Heart right ventricle (tissue), 16 donors: ENCODE measurements at regions of chr9 and their contacts with region 1.

Region 1: DNA sequence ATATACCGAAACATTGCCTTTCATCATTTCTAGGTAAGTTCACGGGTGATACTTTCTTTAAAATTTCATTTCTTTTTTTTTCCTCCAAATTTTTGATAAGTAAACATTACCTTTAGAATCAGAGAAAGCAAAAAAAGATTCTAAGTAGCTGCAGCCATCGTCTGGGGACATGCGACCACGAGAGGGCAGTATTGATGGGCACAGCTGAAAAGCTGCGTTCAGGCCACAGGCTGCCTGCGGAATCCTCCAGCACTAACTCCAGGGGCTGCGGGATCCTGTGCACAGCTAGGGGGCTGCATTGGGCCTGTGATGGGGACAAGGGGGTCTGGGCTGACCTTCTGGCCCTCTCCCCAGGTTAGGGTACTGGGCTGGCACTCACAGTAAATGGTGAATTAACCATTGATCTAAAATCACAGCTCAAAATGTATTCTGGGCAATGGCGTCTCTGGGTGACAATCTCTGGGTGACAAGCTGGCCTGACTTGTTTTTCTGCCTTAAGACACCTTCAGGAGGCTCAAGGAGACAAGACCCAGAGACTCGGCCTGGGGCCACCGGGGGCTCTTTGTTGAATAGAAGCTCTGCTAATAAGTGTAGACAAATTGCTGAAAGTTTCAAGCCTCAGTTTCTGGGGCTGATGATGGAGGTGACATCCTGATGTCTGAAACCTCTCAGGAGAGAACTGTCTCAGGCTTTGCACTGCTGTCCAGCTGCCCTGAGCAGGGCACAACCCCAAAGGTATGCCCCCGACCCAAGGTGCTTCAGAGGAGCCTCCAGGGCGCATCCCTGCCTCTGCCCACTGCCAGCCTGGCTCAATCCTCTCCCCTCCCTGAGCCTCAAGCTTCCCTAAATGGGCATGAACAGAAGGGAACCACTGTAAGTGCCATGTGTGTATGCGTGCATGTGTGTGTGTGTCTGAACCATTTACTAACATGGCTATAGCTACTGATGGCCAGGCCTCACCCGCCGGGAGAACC is 44.3 kb upstream of the SARDH start:
- DNase-seq: peak; percentile 69 to 74
- ATAC-seq: peak in 7 of 8 donors; percentile 34 to 73 (median 62)
- H3K4me3 ChIP-seq: no peak overlapping the region
- H3K27ac ChIP-seq: no peak overlapping the region
- H3K4me1 ChIP-seq: peaks cover 0 to 16% (median 0%) of the 10 kb centered on the region in 9 donors
- H3K27me3 ChIP-seq: no peaks in the 10 kb centered on the region
- CTCF ChIP-seq: peak; percentile 69 to 89 (median 81)

Region 2: DNA sequence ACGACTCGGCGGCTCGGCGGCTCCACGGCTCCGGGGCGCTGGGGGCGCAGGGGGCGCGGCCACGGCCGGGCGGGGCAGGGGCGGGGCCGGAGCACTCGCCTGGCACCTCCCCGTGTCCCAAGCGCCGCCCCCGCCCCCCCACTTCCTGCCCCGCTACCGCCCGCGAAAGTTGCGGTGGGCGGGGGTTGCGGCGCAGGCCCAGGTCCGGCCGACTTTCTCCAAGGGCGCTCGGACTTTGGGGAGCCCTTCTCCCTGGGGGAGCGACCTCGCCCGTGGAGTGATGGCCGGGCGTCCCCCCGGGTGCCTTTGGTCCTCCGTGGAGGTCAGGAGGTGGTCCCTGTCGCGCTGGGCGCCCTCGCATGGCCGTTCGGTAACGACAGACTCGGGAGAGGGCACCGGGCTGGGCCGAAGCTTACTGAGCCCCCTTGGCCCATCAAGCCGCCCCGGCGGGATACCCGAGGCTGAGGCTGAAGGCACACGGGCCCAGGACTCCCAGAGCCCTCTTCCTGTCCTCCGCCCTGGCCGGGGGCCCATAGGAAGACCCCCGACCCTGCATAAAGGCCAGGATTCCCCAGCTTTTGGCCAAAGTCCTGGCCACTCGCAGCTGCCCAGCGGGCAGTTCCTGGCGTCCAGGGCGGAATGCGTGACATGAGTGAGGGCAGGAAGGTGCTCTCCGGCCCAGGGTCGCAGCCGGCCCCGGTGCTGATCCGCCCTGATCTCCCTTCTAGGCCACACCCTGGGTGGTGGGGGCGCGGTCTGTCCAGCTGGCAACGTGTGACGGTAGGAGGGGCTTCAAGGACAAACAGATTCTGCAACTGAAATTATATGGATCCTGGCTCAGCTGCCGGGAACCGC is 210.6 kb after region 1 on chr9:
- intact Hi-C with region 1: loop called in 4 of 10 experiments (anchors 2 kb)
- DNase-seq: peak; percentile 84 to 86
- ATAC-seq: peak; percentile 77 to 92 (median 86)
- H3K4me3 ChIP-seq: peak overlapping the region; percentile 60 to 82 (median 76)
- H3K27ac ChIP-seq: peak overlapping the region; percentile 74 to 97 (median 95)
- H3K4me1 ChIP-seq: peaks cover 8 to 34% (median 23%) of the 10 kb centered on the region in 9 donors
- H3K27me3 ChIP-seq: peaks cover 0 to 17% (median 3%) of the 10 kb centered on the region in 7 donors
- CTCF ChIP-seq: peak in 8 of 9 donors; percentile 21 to 73 (median 48)